CD4-positive, alpha-beta T cell (primary cell): ENCODE measurements at regions of chr7 and their contacts with region 1.

Region 1: GRCh38 chr7:50266635-50267386 is 37.7 kb upstream of the IKZF1 start:
- DNase-seq: peak; percentile 30 to 92 (median 78)
- ATAC-seq: peak; percentile 78
- H3K4me3 ChIP-seq: peak overlapping the region; percentile 19
- H3K4me3 Mint-ChIP-seq: peak overlapping the region; percentile 69
- H3K27ac ChIP-seq: peak overlapping the region; percentile 79 to 82
- H3K27ac Mint-ChIP-seq: peak overlapping the region; percentile 90
- H3K4me1 ChIP-seq: peaks cover 87% of the 10 kb centered on the region
- H3K4me1 Mint-ChIP-seq: peaks cover 98% of the 10 kb centered on the region
- H3K27me3 ChIP-seq: no peaks in the 10 kb centered on the region
- H3K27me3 Mint-ChIP-seq: no peaks in the 10 kb centered on the region
- CTCF ChIP-seq: no peak

Region 2: GRCh38 chr7:50142425-50143017 is 124.3 kb before region 1 on chr7:
- CTCF ChIA-PET with region 1: interaction called, 3 read pairs
- POLR2A ChIA-PET with region 1: no interaction called
- intact Hi-C with region 1: loop called in 1 of 2 experiments (anchors 5 kb)
- DNase-seq: peak in 7 of 14 experiments; percentile 24 to 83 (median 66)
- ATAC-seq: peak; percentile 75
- H3K4me3 ChIP-seq: no peak overlapping the region
- H3K4me3 Mint-ChIP-seq: peak overlapping the region; percentile 44
- H3K27ac ChIP-seq: no peak overlapping the region
- H3K27ac Mint-ChIP-seq: peak overlapping the region; percentile 35
- H3K4me1 ChIP-seq: peaks cover 15% of the 10 kb centered on the region
- H3K4me1 Mint-ChIP-seq: peaks cover 33% of the 10 kb centered on the region
- H3K27me3 ChIP-seq: no peaks in the 10 kb centered on the region
- H3K27me3 Mint-ChIP-seq: no peaks in the 10 kb centered on the region
- CTCF ChIP-seq: peak; percentile 83

Region 3: GRCh38 chr7:50229964-50230363 is 36.8 kb before region 1 on chr7:
- CTCF ChIA-PET with region 1: interaction called, 4 read pairs
- POLR2A ChIA-PET with region 1: interaction called, 32 read pairs
- intact Hi-C with region 1: loop called in 1 of 2 experiments (anchors 5 kb)
- DNase-seq: peak in 4 of 14 experiments; percentile 36 to 45 (median 44)
- ATAC-seq: no peak
- H3K4me3 ChIP-seq: no peak overlapping the region
- H3K4me3 Mint-ChIP-seq: no peak overlapping the region
- H3K27ac ChIP-seq: no peak overlapping the region
- H3K27ac Mint-ChIP-seq: no peak overlapping the region
- H3K4me1 ChIP-seq: peaks cover 20% of the 10 kb centered on the region
- H3K4me1 Mint-ChIP-seq: peaks cover 42% of the 10 kb centered on the region
- H3K27me3 ChIP-seq: no peaks in the 10 kb centered on the region
- H3K27me3 Mint-ChIP-seq: no peaks in the 10 kb centered on the region
- CTCF ChIP-seq: peak; percentile 50

Region 4: DNA sequence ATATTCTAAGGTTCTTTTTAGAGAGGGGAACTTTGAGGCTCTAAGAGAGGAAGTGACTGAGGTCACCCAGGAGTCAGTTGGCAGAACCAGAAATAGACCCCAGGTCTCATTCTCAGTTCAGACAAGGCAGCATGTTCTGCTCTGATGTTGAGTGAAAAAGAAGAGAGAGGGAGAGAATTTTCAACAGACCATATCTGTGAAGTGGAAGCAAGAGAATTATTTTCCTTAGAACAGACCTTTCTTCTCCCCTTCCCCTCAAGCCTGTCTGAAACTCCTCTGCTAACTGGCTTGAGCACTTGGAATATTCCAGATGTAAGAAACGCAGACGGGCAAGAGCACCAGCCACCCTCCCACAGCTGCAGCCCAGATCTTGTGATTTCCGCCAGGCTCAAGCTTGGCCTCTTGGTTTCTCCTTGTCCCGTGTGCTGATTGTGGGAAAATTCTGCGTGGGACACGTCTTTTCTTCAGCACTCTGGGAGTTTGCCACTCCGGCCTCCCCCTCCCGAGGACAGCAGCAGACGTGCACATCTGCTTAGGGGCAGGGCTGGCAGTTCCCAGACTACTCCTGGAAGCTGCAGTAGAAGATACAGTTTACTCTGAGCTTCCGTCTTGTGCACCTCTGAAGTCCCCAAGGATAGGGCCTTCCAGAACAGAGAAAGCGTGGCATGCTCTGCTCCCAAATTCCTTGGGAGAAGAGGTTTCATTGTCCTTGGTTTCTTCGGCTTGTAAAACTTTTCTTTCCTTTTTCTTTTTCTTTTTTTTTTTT is 15.1 kb after region 1 on chr7:
- CTCF ChIA-PET with region 1: no interaction called
- POLR2A ChIA-PET with region 1: interaction called, 14 read pairs
- intact Hi-C with region 1: loop called in 1 of 2 experiments (anchors 2 kb)
- DNase-seq: peak in 2 of 14 experiments; percentile 34 to 44
- ATAC-seq: peak; percentile 62
- H3K4me3 ChIP-seq: peak overlapping the region; percentile 1
- H3K4me3 Mint-ChIP-seq: peak overlapping the region; percentile 77
- H3K27ac ChIP-seq: peak overlapping the region in 1 of 2 donors; percentile 52
- H3K27ac Mint-ChIP-seq: peak overlapping the region; percentile 70
- H3K4me1 ChIP-seq: peaks cover 30% of the 10 kb centered on the region
- H3K4me1 Mint-ChIP-seq: peaks cover 76% of the 10 kb centered on the region
- H3K27me3 ChIP-seq: no peaks in the 10 kb centered on the region
- H3K27me3 Mint-ChIP-seq: no peaks in the 10 kb centered on the region
- CTCF ChIP-seq: no peak

Region 5: GRCh38 chr7:50304158-50304910 is 37.5 kb after region 1 on chr7 and contains the start of gene IKZF1:
- CTCF ChIA-PET with region 1: interaction called, 5 read pairs
- POLR2A ChIA-PET with region 1: interaction called, 350 read pairs
- intact Hi-C with region 1: loop called (anchors 2 kb)
- DNase-seq: peak in 12 of 14 experiments; percentile 31 to 81 (median 62)
- ATAC-seq: peak; percentile 25
- H3K4me3 ChIP-seq: peak within 1 kb of the TSS; percentile 87
- H3K4me3 Mint-ChIP-seq: peak within 1 kb of the TSS; percentile 100
- H3K27ac ChIP-seq: peak within 1 kb of the TSS; percentile 67 to 93
- H3K27ac Mint-ChIP-seq: peak within 1 kb of the TSS; percentile 90
- H3K4me1 ChIP-seq: peaks cover 40% of the 10 kb centered on the region
- H3K4me1 Mint-ChIP-seq: peaks cover 63% of the 10 kb centered on the region
- H3K27me3 ChIP-seq: no peaks in the 10 kb centered on the region
- H3K27me3 Mint-ChIP-seq: no peaks in the 10 kb centered on the region
- CTCF ChIP-seq: no peak
- total RNA-seq, gene IKZF1: 297 to 300 TPM

Region 6: DNA sequence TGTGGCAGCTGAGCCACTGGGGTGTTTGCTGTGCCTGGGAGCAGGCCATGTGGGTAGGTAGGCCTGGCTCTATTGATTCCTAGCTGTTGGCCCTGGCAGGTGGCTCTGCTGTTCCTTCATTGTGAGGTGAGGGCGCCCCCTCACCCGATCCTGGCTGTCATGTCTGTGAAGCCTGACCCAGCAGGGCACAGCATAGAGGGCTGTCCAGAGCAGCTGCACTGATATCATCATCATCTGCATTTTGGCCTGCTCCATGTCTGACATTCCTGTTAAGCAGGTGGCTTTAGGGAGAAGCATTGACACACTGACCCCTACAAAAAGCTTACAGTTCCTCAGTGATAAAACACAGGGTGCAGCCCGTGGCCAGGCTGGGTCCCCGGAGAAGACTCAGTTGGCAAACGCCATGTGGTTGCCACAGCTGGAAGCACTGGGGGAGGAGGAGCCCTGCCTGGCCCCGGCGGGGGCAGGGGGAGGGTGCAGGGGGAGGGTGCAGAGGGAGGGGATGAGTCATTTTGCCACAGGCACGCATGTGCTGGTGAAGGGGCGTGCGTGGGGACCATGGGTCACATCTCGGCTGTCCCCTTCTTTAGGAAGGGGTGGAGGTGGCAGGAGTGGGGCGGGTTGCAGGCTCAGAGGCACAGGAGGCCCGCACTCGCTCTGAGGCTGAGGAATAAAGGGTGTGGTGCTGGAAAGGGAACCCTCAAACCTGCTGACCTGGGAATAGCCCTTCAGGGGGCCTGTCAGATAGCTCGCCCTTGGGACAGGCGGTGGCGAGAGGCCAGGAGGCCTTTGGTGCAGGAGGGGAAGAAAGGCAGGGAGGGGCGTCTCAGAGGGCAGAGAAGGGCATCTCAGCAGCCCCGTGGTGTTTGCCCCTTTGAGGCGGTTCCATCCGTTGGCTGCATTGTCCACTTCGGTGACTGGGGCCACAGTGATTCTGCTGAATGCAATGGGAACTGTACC is 69.3 kb after region 1 on chr7:
- CTCF ChIA-PET with region 1: no interaction called
- POLR2A ChIA-PET with region 1: interaction called, 15 read pairs
- intact Hi-C with region 1: no loop called
- DNase-seq: peak in 13 of 14 experiments; percentile 73 to 91 (median 85)
- ATAC-seq: peak; percentile 50
- H3K4me3 ChIP-seq: peak overlapping the region; percentile 24
- H3K4me3 Mint-ChIP-seq: no peak overlapping the region
- H3K27ac ChIP-seq: peak overlapping the region; percentile 87 to 91
- H3K27ac Mint-ChIP-seq: no peak overlapping the region
- H3K4me1 ChIP-seq: peaks cover 94% of the 10 kb centered on the region
- H3K4me1 Mint-ChIP-seq: peaks cover 14% of the 10 kb centered on the region
- H3K27me3 ChIP-seq: no peaks in the 10 kb centered on the region
- H3K27me3 Mint-ChIP-seq: no peaks in the 10 kb centered on the region
- CTCF ChIP-seq: no peak

Region 7: GRCh38 chr7:50359995-50360925 is 93.4 kb after region 1 on chr7:
- CTCF ChIA-PET with region 1: interaction called, 3 read pairs
- POLR2A ChIA-PET with region 1: interaction called, 33 read pairs
- intact Hi-C with region 1: no loop called
- DNase-seq: peak; percentile 71 to 96 (median 79)
- ATAC-seq: peak; percentile 86
- H3K4me3 ChIP-seq: peak overlapping the region; percentile 17
- H3K4me3 Mint-ChIP-seq: peak overlapping the region; percentile 76
- H3K27ac ChIP-seq: peak overlapping the region; percentile 86 to 96
- H3K27ac Mint-ChIP-seq: no peak overlapping the region
- H3K4me1 ChIP-seq: peaks cover 96% of the 10 kb centered on the region
- H3K4me1 Mint-ChIP-seq: peaks cover 96% of the 10 kb centered on the region
- H3K27me3 ChIP-seq: no peaks in the 10 kb centered on the region
- H3K27me3 Mint-ChIP-seq: no peaks in the 10 kb centered on the region
- CTCF ChIP-seq: no peak

Region 8: DNA sequence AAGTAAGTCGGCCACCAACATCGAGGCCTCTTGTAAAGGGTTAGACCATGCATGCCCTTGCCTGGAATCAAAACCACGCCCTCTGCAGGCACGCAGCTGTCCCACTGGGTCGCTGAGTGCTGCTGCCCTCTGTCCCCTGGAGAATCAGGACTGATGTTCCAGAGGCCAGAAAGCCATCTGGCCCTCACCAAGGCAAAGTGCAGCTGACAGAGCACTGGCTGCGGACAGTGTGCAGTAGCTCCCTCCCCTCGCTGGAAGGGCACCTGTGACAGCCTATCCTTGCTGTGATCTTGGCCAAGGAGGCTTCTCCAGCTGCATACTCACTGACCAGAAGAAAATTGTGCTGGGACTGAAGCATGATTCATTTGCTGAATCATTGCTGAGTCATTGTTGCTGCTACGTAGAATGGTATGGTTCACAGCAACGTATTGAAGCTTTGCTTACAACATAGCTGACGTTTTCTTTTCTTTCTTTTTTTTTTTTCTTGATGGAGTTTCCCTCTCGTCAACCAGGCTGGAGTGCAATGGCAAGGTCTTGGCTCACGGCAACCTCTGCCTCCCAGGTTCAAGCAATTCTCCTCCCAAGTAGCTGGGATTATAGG is 268.0 kb after region 1 on chr7:
- CTCF ChIA-PET with region 1: no interaction called
- POLR2A ChIA-PET with region 1: no interaction called
- intact Hi-C with region 1: no loop called
- DNase-seq: peak in 2 of 14 experiments; percentile 25 to 37
- ATAC-seq: no peak
- H3K4me3 ChIP-seq: no peak overlapping the region
- H3K4me3 Mint-ChIP-seq: no peak overlapping the region
- H3K27ac ChIP-seq: no peak overlapping the region
- H3K27ac Mint-ChIP-seq: no peak overlapping the region
- H3K4me1 ChIP-seq: no peaks in the 10 kb centered on the region
- H3K4me1 Mint-ChIP-seq: no peaks in the 10 kb centered on the region
- H3K27me3 ChIP-seq: peaks cover 0 to 4% of the 10 kb centered on the region in 2 experiments
- H3K27me3 Mint-ChIP-seq: peaks cover 16% of the 10 kb centered on the region
- CTCF ChIP-seq: no peak